RWPE1 (cell line): ENCODE measurements at regions of chrX and their contacts with region 1.

Region 1: GRCh38 chrX:150897421-150898320 is 797 bp downstream of the CD99L2 start:
- DNase-seq: peak; percentile 3
- H3K27ac ChIP-seq: peak overlapping the region; percentile 59
- CTCF ChIP-seq: no peak

Region 2: DNA sequence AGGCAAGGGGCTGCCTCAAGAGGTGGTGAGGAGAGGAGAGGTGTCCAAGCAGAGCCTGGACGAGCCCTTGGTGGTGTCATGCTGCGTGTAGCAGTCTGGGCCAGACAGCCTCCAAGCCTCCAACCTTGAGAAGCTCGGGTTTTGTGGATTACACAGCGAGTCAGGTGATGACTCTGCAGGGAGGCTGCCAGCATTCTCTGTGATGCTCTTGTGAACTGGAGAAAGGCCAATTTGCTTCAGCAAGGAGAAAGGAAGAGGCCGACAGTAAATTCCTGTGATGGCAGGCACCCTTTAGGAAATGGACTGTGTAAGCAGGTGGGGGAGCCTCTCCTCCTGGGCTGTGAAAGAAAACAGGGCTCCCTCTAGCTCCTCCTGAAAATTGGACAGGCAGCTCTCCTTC is 36.8 kb after region 1 on chrX:
- CTCF ChIA-PET with region 1: no interaction called
- POLR2A ChIA-PET with region 1: no interaction called
- DNase-seq: peak; percentile 2
- H3K27ac ChIP-seq: no peak overlapping the region
- CTCF ChIP-seq: no peak

Region 3: GRCh38 chrX:150967786-150968185 is 70.1 kb after region 1 on chrX:
- CTCF ChIA-PET with region 1: no interaction called
- POLR2A ChIA-PET with region 1: interaction called, 11 read pairs
- DNase-seq: no peak
- H3K27ac ChIP-seq: no peak overlapping the region
- CTCF ChIP-seq: no peak

Region 4: GRCh38 chrX:151268836-151269235 is 371.2 kb after region 1 on chrX:
- CTCF ChIA-PET with region 1: no interaction called
- POLR2A ChIA-PET with region 1: no interaction called
- DNase-seq: no peak
- H3K27ac ChIP-seq: no peak overlapping the region
- CTCF ChIP-seq: no peak

Region 5: GRCh38 chrX:152872522-152872921 is 1974.9 kb after region 1 on chrX:
- CTCF ChIA-PET with region 1: no interaction called
- POLR2A ChIA-PET with region 1: interaction called, 11 read pairs
- DNase-seq: no peak
- H3K27ac ChIP-seq: no peak overlapping the region
- CTCF ChIP-seq: no peak